BJ (cell line): ENCODE measurements at regions of chr2 and their contacts with region 1.

Region 1: DNA sequence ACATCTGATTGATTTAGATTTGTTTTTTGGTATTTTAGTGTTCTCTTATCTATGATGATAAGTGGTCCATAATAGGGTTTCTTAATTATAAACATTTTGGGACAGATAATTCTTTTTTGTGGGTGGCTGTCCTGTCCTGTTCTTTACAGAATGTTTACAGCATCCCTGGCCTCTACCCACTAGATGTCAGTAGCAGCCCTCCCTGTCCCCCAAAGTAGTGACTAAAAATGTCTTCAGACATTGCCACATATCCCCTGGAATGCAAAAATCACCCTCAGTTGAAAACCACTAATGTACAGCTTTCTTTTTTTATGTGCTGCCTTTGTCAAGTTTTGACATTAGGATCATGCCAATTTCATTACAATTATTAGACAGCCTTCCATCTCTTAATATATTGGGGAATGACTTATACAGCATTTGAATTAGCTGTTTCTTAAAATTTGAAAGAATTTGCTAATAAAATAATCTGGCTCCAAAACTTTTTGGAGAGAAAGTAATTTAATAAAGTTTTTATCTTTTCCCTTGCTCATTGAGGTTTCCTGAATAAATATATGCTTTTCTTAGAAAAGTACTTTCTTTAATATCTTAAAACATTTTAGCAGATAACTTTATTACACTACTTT is 19.5 kb downstream of the WIPF1 start:
- DNase-seq: no peak
- H3K4me3 ChIP-seq: no peak overlapping the region
- H3K27me3 ChIP-seq: no peaks in the 10 kb centered on the region
- CTCF ChIP-seq: peak; percentile 82

Region 2: GRCh38 chr2:174682578-174683391 is 104.7 kb after region 1 on chr2:
- CTCF ChIA-PET with region 1: interaction called, 86 read pairs
- POLR2A ChIA-PET with region 1: interaction called, 6 read pairs
- DNase-seq: no peak
- H3K4me3 ChIP-seq: peak overlapping the region; percentile 92
- H3K27me3 ChIP-seq: no peaks in the 10 kb centered on the region
- CTCF ChIP-seq: no peak